PC-3 (cell line): ENCODE measurements at regions of chr7 and their contacts with region 1.

Region 1: GRCh38 chr7:44858161-44858560 is 10.3 kb upstream of the H2AZ2 start:
- DNase-seq: no peak
- ATAC-seq: no peak
- H3K4me3 ChIP-seq: no peak overlapping the region
- H3K27ac ChIP-seq: no peak overlapping the region
- H3K4me1 ChIP-seq: no peaks in the 10 kb centered on the region
- H3K27me3 ChIP-seq: no peaks in the 10 kb centered on the region
- CTCF ChIP-seq: no peak

Region 2: GRCh38 chr7:44921607-44922359 is 63.6 kb after region 1 on chr7:
- CTCF ChIA-PET with region 1: no interaction called
- POLR2A ChIA-PET with region 1: interaction called, 5 read pairs
- intact Hi-C with region 1: loop called (anchors 1 kb)
- DNase-seq: peak; percentile 78
- ATAC-seq: peak; percentile 97
- H3K4me3 ChIP-seq: no peak overlapping the region
- H3K27ac ChIP-seq: no peak overlapping the region
- H3K4me1 ChIP-seq: no peaks in the 10 kb centered on the region
- H3K27me3 ChIP-seq: no peaks in the 10 kb centered on the region
- CTCF ChIP-seq: peak; percentile 86